ENCODE measurements at regions of chr4 and their contacts with region 1.

Region 1: GRCh38 chr4:177841258-177841657 is 399.0 kb upstream of the AGA start:
- DNase-seq: no peak
- ATAC-seq: no peak
- H3K4me3 ChIP-seq: no peak overlapping the region
- H3K4me3 Mint-ChIP-seq: no peak overlapping the region
- H3K27ac ChIP-seq: no peak overlapping the region
- H3K27ac Mint-ChIP-seq: no peak overlapping the region
- H3K4me1 ChIP-seq: no peaks in the 10 kb centered on the region
- H3K4me1 Mint-ChIP-seq: no peaks in the 10 kb centered on the region
- H3K27me3 ChIP-seq: no peaks in the 10 kb centered on the region
- H3K27me3 Mint-ChIP-seq: no peaks in the 10 kb centered on the region

Region 2: GRCh38 chr4:177190995-177191568 is 650.2 kb before region 1 on chr4:
- CTCF ChIA-PET with region 1: no interaction called
- POLR2A ChIA-PET with region 1: no interaction called
- intact Hi-C with region 1: no loop called
- DNase-seq: no peak
- ATAC-seq: no peak
- H3K4me3 ChIP-seq: no peak overlapping the region
- H3K4me3 Mint-ChIP-seq: no peak overlapping the region
- H3K27ac ChIP-seq: no peak overlapping the region
- H3K27ac Mint-ChIP-seq: no peak overlapping the region
- H3K4me1 ChIP-seq: no peaks in the 10 kb centered on the region
- H3K4me1 Mint-ChIP-seq: no peaks in the 10 kb centered on the region
- H3K27me3 ChIP-seq: no peaks in the 10 kb centered on the region
- H3K27me3 Mint-ChIP-seq: no peaks in the 10 kb centered on the region

Region 3: DNA sequence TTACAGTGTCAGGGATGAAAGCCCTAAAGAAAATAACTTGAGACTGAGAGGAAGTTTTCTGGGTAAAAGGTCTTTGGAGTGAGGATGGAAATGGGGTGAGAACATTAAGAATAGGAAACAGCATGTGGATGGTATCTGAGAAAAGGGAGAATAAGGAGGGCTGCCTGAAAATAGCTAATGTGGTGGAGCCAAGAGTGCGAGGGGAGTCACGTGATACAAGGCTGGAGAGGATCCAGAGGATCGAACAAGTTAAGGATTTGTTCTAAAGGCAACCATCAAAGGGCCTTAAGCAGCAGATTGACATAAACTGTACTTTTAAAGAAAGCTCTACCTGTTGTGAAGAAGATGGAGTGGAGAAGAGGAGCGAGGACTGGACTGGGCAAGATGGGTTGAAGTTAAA is 51.6 kb before region 1 on chr4:
- CTCF ChIA-PET with region 1: no interaction called
- POLR2A ChIA-PET with region 1: no interaction called
- intact Hi-C with region 1: loop called in 1 of 2 experiments (anchors 10 kb)
- DNase-seq: no peak
- ATAC-seq: no peak
- H3K4me3 ChIP-seq: no peak overlapping the region
- H3K4me3 Mint-ChIP-seq: no peak overlapping the region
- H3K27ac ChIP-seq: no peak overlapping the region
- H3K27ac Mint-ChIP-seq: no peak overlapping the region
- H3K4me1 ChIP-seq: no peaks in the 10 kb centered on the region
- H3K4me1 Mint-ChIP-seq: no peaks in the 10 kb centered on the region
- H3K27me3 ChIP-seq: no peaks in the 10 kb centered on the region
- H3K27me3 Mint-ChIP-seq: no peaks in the 10 kb centered on the region

Region 4: DNA sequence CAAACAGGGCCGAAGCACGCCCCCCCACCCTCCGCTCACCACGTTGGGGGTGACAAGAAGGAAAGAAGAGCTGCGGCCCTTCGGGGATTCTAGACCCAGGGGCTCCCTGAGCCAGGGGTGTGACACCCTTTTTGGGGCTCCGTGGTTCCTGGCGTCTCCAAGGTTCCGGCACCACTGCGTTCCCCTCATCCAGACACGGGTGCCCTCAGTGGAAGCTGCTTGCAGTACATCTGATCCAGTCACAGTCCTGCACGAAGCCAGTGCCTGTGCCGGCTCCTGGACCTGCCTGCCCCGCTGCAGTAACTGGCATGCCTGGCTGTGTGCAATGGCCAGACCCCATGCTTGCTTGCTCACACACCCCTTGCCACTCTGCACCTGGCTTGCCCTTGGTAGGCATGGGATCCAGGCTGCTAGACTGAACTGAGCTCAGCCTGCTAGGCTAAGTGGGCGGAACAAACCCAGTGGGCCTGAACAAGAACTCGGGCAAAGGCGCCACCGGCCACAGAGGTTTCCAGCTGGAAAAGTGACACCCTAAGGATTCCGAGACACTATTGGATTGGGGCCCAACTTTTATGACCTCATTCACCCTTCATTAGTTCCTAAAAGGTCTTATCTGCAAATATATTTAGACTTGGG is 21.4 kb after region 1 on chr4:
- CTCF ChIA-PET with region 1: no interaction called
- POLR2A ChIA-PET with region 1: no interaction called
- intact Hi-C with region 1: no loop called
- DNase-seq: no peak
- ATAC-seq: no peak
- H3K4me3 ChIP-seq: no peak overlapping the region
- H3K4me3 Mint-ChIP-seq: no peak overlapping the region
- H3K27ac ChIP-seq: no peak overlapping the region
- H3K27ac Mint-ChIP-seq: no peak overlapping the region
- H3K4me1 ChIP-seq: no peaks in the 10 kb centered on the region
- H3K4me1 Mint-ChIP-seq: no peaks in the 10 kb centered on the region
- H3K27me3 ChIP-seq: no peaks in the 10 kb centered on the region
- H3K27me3 Mint-ChIP-seq: no peaks in the 10 kb centered on the region